Right ventricle myocardium inferior (tissue), 1 donor: ENCODE measurements at regions of chr7 and their contacts with region 1.

Region 1: GRCh38 chr7:116354546-116355408 is 144.4 kb downstream of the TES start:
- DNase-seq: peak; percentile 69
- ATAC-seq: peak; percentile 89

Region 2: DNA sequence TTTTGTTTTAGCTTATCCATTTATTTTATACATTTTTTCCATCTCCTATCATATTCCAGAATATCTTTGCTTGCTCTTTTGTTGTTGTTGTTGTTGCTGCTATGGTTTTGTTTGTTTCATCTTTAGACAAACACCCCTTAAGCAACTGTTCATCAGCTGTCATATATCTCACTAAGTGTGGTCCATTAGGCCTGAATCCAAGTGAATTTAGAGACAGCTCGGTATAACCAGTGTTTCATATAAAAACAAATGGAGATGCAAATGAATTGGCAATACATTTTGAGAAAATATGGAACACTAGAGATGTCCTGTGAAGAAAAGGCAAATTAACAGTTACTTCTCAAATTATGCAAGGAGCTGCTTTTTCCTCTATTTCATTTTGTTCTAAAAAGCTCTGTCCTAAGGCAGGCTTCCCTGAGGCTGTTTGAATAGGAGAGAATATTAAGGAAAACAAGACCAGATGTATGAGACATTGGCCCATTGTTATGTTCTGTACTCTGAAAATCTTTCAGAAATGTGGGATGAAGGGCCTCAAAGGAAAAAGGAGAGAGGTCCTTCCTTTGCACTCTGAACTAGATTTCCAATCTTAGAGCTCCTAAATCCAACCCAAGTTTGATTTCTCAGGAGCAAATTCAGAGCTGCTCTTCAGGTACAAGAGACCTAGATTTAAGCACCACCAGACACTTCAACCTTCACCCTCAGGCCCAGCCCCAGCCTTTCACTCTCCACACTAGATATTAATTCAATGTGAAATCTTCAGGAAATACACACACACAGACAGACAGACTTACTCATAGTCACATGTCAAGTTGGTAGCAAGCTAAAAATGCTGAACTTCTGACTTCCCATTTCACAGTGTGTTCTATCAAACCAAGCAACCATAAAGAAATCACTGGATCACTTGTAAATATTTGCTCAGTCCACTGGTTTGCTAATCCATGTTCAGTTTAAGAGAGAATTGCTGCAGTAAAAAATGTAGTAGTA is 329.7 kb before region 1 on chr7:
- intact Hi-C with region 1: no loop called
- DNase-seq: no peak
- ATAC-seq: peak; percentile 20

Region 3: GRCh38 chr7:116271963-116272839 is 82.6 kb before region 1 on chr7:
- intact Hi-C with region 1: loop called (anchors 2 kb)
- DNase-seq: no peak
- ATAC-seq: peak; percentile 90

Region 4: DNA sequence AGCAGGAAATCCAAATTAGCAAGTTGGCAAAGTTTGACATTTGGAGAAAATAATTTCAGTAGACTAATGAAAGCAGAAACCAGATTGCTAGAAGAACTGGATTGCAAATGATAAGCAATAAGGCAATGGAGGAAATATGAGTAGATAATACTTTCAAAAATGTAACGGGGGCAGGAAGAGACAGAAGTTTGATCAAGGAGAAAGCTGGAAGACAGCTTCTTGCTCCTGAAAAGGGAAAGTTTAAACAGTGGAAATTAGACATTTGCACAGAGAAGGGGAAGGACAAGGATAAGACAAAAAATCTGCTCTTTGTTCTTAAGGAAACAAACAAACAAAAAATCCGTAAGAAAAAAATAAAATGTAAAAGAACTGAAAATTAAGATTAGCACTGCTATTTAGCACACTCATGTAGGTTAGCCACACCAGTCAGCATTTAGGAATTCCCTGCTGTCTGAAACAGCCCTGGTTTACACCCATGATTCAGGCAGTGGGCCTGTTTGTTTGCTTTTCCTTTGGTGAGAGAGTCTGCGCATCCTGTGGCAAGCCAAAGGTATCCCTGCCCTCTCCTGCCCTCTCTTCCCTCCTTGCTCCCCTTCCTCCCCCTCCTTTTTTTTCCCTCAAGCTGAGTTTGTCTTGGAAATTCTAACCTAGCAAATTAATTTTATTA is 40.5 kb after region 1 on chr7:
- intact Hi-C with region 1: loop called (anchors 1 kb)
- DNase-seq: no peak
- ATAC-seq: no peak

Region 5: GRCh38 chr7:116407165-116407564 is 52.4 kb after region 1 on chr7:
- intact Hi-C with region 1: no loop called
- DNase-seq: no peak
- ATAC-seq: no peak

Region 6: GRCh38 chr7:116499168-116500077 is 144.6 kb after region 1 on chr7 and contains the start of gene CAV2:
- intact Hi-C with region 1: loop called (anchors 1 kb)
- DNase-seq: peak; percentile 83
- ATAC-seq: peak; percentile 93
- total RNA-seq, gene CAV2: 239 TPM

Region 7: GRCh38 chr7:116525913-116526861 is 171.4 kb after region 1 on chr7:
- intact Hi-C with region 1: loop called (anchors 1 kb)
- DNase-seq: peak; percentile 89
- ATAC-seq: peak; percentile 90